Mammary epithelial cell (primary cell): ENCODE measurements at regions of chr9 and their contacts with region 1.

Region 1: GRCh38 chr9:130860458-130861316 is 25.6 kb downstream of the ABL1 start:
- DNase-seq: no peak
- H3K4me3 ChIP-seq: no peak overlapping the region
- H3K27ac ChIP-seq: peak overlapping the region; percentile 8
- H3K4me1 ChIP-seq: peaks cover 30% of the 10 kb centered on the region
- H3K27me3 ChIP-seq: no peaks in the 10 kb centered on the region
- CTCF ChIP-seq: peak in 1 of 2 donors; percentile 30

Region 2: GRCh38 chr9:130701056-130702022 is 159.3 kb before region 1 on chr9:
- CTCF ChIA-PET with region 1: no interaction called
- dilution Hi-C with region 1: loop called (anchors 5 kb)
- in situ Hi-C with region 1: loop called in 1 of 2 experiments (anchors 5 kb)
- intact Hi-C with region 1: loop called (anchors 1 kb)
- DNase-seq: peak; percentile 44
- H3K4me3 ChIP-seq: no peak overlapping the region
- H3K27ac ChIP-seq: no peak overlapping the region
- H3K4me1 ChIP-seq: peaks cover 7% of the 10 kb centered on the region
- H3K27me3 ChIP-seq: no peaks in the 10 kb centered on the region
- CTCF ChIP-seq: peak; percentile 88 to 93

Region 3: GRCh38 chr9:130707225-130707976 is 153.3 kb before region 1 on chr9:
- CTCF ChIA-PET with region 1: no interaction called
- dilution Hi-C with region 1: no loop called
- in situ Hi-C with region 1: loop called in 1 of 2 experiments (anchors 5 kb)
- intact Hi-C with region 1: no loop called
- DNase-seq: peak; percentile 32
- H3K4me3 ChIP-seq: no peak overlapping the region
- H3K27ac ChIP-seq: no peak overlapping the region
- H3K4me1 ChIP-seq: no peaks in the 10 kb centered on the region
- H3K27me3 ChIP-seq: no peaks in the 10 kb centered on the region
- CTCF ChIP-seq: peak; percentile 65 to 66

Region 4: DNA sequence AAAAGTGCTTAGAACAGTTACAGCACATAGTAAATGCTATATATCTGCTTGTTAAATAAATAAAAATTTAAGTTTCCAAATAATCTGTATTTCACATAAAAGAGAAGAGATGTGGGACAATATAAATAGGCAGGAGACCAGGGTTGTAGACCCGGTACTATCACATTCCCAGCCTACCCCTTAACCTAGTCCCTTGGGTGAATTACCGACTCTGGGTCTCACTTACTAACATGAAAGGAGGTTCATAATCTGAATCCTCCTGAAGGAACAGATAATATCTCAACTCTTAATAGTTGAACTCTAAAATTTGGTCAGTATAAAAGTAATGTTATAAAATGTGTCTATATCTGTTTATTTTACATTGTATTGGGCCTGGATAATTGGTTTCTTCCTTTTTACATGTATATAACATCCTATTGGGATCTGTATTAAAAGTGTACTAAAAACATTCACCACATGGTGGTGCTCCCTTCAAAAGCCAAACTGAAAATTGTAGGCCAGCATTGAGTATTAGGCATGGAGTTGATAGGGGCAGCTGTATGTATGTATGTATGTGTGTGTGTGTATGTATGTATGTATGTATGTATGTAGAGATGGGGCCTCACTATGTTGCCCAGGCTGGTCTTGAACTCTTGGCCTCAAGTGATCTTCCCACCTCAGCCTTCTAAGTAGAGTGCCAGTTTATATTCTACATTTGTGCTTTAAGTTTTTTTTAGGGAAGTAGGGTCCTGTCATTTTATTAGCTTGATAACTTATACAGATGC is 89.8 kb before region 1 on chr9:
- CTCF ChIA-PET with region 1: interaction called, 6 read pairs
- dilution Hi-C with region 1: no loop called
- in situ Hi-C with region 1: loop called (anchors 5 kb)
- intact Hi-C with region 1: loop called (anchors 1 kb)
- DNase-seq: peak; percentile 47
- H3K4me3 ChIP-seq: no peak overlapping the region
- H3K27ac ChIP-seq: no peak overlapping the region
- H3K4me1 ChIP-seq: peaks cover 10% of the 10 kb centered on the region
- H3K27me3 ChIP-seq: no peaks in the 10 kb centered on the region
- CTCF ChIP-seq: peak; percentile 45 to 60

Region 5: GRCh38 chr9:130794923-130795495 is 65.7 kb before region 1 on chr9:
- CTCF ChIA-PET with region 1: no interaction called
- dilution Hi-C with region 1: loop called (anchors 5 kb)
- in situ Hi-C with region 1: no loop called
- intact Hi-C with region 1: no loop called
- DNase-seq: no peak
- H3K4me3 ChIP-seq: no peak overlapping the region
- H3K27ac ChIP-seq: no peak overlapping the region
- H3K4me1 ChIP-seq: no peaks in the 10 kb centered on the region
- H3K27me3 ChIP-seq: no peaks in the 10 kb centered on the region
- CTCF ChIP-seq: no peak

Region 6: GRCh38 chr9:130815242-130815808 is 45.4 kb before region 1 on chr9:
- CTCF ChIA-PET with region 1: no interaction called
- dilution Hi-C with region 1: no loop called
- in situ Hi-C with region 1: no loop called
- intact Hi-C with region 1: no loop called
- DNase-seq: peak; percentile 47
- H3K4me3 ChIP-seq: no peak overlapping the region
- H3K27ac ChIP-seq: no peak overlapping the region
- H3K4me1 ChIP-seq: peaks cover 5% of the 10 kb centered on the region
- H3K27me3 ChIP-seq: no peaks in the 10 kb centered on the region
- CTCF ChIP-seq: no peak

Region 7: DNA sequence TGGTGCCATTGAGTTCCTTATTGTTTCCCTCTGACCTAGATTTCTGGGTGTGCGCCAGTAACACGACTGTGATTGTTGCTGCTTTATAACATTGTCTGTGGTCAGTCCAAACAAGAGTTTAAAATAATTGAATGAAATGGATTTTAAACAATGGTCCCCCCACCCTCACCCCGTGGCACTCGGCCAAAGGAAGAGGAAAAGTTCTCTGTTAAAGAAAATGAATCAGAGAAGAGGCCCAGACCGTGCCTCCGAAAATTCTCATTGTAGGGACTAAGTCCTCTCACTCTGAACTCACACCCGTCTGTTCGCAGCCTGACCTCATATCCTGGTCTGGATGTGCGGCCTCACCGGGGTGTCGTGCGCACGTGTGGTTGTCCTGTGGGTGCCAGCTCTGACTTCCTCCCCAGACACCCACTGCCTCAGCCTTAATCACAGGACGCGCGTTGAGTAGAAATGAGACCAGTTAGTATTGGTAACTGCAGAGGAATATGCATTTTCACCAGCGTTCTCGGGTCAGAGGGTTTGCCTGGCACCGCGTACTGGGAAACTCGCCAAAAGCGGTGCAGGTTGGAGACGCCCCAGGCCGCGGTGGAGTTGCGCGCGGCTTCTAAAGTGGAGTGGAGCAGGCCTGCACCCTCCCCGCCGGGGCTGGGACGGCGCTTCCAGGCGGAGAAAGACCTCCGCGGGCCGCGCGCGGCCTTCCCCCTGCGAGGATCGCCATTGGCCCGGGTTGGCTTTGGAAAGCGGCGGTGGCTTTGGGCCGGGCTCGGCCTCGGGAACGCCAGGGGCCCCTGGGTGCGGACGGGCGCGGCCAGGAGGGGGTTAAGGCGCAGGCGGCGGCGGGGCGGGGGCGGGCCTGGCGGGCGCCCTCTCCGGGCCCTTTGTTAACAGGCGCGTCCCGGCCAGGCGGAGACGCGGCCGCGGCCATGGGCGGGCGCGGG is 26.0 kb before region 1 on chr9 and contains the start of gene ABL1:
- CTCF ChIA-PET with region 1: interaction called, 3 read pairs
- dilution Hi-C with region 1: no loop called
- in situ Hi-C with region 1: no loop called
- intact Hi-C with region 1: loop called (anchors 2 kb)
- DNase-seq: peak; percentile 93
- H3K4me3 ChIP-seq: peak within 1 kb of the TSS; percentile 67 to 78 (median 78)
- H3K27ac ChIP-seq: peak within 1 kb of the TSS; percentile 80
- H3K4me1 ChIP-seq: peaks cover 19% of the 10 kb centered on the region
- H3K27me3 ChIP-seq: no peaks in the 10 kb centered on the region
- CTCF ChIP-seq: no peak
- total RNA-seq, gene ABL1: 50.5 to 52.8 TPM

Region 8: GRCh38 chr9:130847327-130848217 is 13.1 kb before region 1 on chr9:
- CTCF ChIA-PET with region 1: no interaction called
- dilution Hi-C with region 1: no loop called
- in situ Hi-C with region 1: no loop called
- intact Hi-C with region 1: loop called (anchors 1 kb)
- DNase-seq: peak; percentile 98
- H3K4me3 ChIP-seq: peak overlapping the region in 1 of 3 experiments; percentile 5
- H3K27ac ChIP-seq: peak overlapping the region; percentile 76
- H3K4me1 ChIP-seq: peaks cover 35% of the 10 kb centered on the region
- H3K27me3 ChIP-seq: no peaks in the 10 kb centered on the region
- CTCF ChIP-seq: peak; percentile 22 to 41